Cardiac septum (tissue), 1 donor: ENCODE measurements at regions of chr1 and their contacts with region 1.

Region 1: GRCh38 chr1:145891587-145892485 is 6.2 kb upstream of the ANKRD35 start:
- DNase-seq: peak; percentile 93

Region 2: GRCh38 chr1:145757420-145757819 is 134.4 kb before region 1 on chr1:
- intact Hi-C with region 1: no loop called
- DNase-seq: no peak

Region 3: DNA sequence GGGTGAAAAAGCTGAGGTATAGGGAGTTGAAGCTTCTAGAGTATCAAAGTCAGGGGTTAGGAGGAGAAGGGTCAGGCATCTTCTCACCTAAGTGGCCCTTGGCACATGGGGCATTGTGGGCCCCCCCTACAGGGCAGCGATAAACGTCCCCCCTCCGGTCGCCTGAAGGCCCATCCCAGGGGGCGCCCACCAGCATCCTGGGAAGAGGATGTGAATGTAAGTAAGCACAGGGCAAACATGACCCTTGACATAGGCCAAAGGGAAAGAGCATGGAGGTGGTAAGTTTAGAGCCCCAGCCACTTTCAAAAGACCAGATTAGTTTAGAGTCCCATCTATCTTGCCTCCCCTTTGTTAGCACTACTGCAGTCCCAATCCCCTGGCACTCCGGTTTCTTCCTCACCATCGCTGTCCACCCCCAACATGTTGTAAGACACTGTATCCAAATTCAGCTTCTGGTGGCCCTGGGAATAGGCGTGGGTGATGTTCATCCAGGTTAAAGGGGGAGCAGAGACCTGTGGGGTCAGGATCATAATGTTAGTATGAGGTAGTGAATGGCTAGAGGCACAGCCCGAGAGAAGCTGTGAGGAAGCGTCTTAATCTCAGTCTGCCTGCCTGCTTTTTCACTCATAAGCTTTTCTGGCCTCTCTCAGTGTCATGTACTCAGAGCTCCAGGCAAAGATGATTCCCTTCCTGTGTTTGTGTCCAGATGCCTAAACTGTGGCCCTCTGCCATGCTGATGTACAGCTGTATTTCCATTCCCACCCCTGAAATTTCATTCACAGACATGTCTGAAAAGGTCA is 15.3 kb after region 1 on chr1:
- intact Hi-C with region 1: loop called (anchors 1 kb)
- DNase-seq: no peak

Region 4: GRCh38 chr1:145957443-145958319 is 65.8 kb after region 1 on chr1 and contains the start of gene LIX1L:
- intact Hi-C with region 1: loop called (anchors 2 kb)
- DNase-seq: peak; percentile 98
- total RNA-seq, gene LIX1L: 25.6 TPM

Region 5: DNA sequence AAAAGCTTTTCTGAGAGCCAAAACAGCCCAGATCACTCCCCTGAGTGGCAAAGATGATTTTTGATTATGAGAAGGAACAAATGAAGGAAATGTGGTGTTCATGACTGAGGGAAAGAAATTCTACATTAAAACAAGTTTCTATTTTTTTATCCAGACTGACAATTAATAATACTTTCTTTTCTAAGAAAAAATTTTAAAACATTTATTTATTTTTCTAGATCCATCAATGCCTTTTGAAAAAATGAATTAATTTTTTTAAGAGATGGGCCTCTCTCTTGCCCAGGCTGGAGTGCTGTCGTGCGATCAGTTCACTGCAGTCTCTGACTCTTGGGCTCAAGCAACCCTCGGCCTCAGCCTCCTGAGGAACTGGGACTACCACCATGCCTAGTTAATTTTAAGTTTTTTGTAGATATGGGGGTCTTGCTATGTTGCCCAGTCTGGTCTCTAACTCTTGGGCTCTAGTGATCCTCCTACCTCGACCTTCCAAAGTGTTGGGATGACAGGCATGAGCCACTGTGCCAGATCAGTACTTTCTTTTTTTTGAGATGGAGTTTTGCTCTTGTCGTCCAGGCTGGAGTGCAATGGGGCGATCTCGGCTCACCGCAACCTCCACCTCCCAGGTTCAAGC is 115.8 kb after region 1 on chr1:
- intact Hi-C with region 1: loop called (anchors 2 kb)
- DNase-seq: no peak